Psoas muscle (tissue), 8 donors: ENCODE measurements at regions of chr4 and their contacts with region 1.

Region 1: DNA sequence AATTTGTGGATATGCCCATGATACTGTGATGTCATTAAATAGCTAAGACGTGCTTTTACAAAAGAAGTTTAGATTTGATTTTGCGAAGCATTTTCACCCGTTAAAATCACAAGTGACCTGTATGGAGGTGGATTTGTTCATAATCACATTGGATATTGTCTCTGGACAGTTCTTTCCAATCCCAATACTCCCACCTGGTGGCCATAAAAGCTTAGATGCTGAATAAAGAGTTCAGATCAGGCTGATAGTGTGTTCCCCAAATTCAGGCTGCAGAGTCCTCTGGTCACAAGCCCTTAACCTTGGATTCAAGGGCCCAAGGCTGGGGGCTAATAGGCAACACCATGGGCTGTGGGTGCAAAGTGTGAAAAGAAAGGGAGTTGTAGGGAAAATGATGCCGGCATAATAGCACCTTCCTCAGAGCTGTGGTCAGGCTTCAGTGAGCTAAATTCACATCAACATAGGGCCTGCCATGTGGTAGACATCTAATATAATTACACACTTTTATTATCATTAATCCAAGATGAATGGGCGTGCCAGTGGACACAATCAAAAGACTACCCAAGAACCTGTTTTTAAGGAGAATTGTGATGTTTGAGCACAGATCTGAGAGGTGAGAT is 28.1 kb downstream of the SMIM43 start:
- DNase-seq: no peak
- ATAC-seq: peak in 2 of 4 donors; percentile 39 to 67
- H3K4me3 ChIP-seq: no peak overlapping the region
- H3K27ac ChIP-seq: no peak overlapping the region
- H3K4me1 ChIP-seq: no peaks in the 10 kb centered on the region
- H3K27me3 ChIP-seq: peaks cover 0 to 3% (median 0%) of the 10 kb centered on the region in 3 donors
- CTCF ChIP-seq: peak; percentile 45

Region 2: GRCh38 chr4:121192480-121192879 is 544.4 kb before region 1 on chr4:
- intact Hi-C with region 1: loop called in 1 of 2 experiments (anchors 10 kb)
- DNase-seq: no peak
- ATAC-seq: peak in 1 of 4 donors; percentile 49
- H3K4me3 ChIP-seq: peak overlapping the region; percentile 42
- H3K27ac ChIP-seq: no peak overlapping the region
- H3K4me1 ChIP-seq: no peaks in the 10 kb centered on the region
- H3K27me3 ChIP-seq: no peaks in the 10 kb centered on the region
- CTCF ChIP-seq: peak; percentile 69

Region 3: GRCh38 chr4:121370729-121371325 is 366.0 kb before region 1 on chr4:
- intact Hi-C with region 1: loop called (anchors 5 kb)
- DNase-seq: no peak
- ATAC-seq: no peak
- H3K4me3 ChIP-seq: no peak overlapping the region
- H3K27ac ChIP-seq: no peak overlapping the region
- H3K4me1 ChIP-seq: no peaks in the 10 kb centered on the region
- H3K27me3 ChIP-seq: no peaks in the 10 kb centered on the region
- CTCF ChIP-seq: peak; percentile 50

Region 4: GRCh38 chr4:121484633-121485032 is 252.2 kb before region 1 on chr4:
- intact Hi-C with region 1: loop called in 1 of 2 experiments (anchors 2 kb)
- DNase-seq: no peak
- ATAC-seq: peak in 1 of 4 donors; percentile 31
- H3K4me3 ChIP-seq: no peak overlapping the region
- H3K27ac ChIP-seq: no peak overlapping the region
- H3K4me1 ChIP-seq: no peaks in the 10 kb centered on the region
- H3K27me3 ChIP-seq: no peaks in the 10 kb centered on the region
- CTCF ChIP-seq: peak; percentile 43